WTC11 (cell line): ENCODE measurements at regions of chr10 and their contacts with region 1.

Region 1: GRCh38 chr10:116737627-116738327 is 4.6 kb downstream of the HSPA12A start:
- DNase-seq: peak; percentile 49
- ATAC-seq: peak; percentile 47
- H3K4me3 Mint-ChIP-seq: no peak overlapping the region
- H3K27ac Mint-ChIP-seq: no peak overlapping the region
- H3K4me1 Mint-ChIP-seq: peaks cover 8% of the 10 kb centered on the region
- H3K27me3 Mint-ChIP-seq: peaks cover 40% of the 10 kb centered on the region
- CTCF ChIP-seq: no peak

Region 2: DNA sequence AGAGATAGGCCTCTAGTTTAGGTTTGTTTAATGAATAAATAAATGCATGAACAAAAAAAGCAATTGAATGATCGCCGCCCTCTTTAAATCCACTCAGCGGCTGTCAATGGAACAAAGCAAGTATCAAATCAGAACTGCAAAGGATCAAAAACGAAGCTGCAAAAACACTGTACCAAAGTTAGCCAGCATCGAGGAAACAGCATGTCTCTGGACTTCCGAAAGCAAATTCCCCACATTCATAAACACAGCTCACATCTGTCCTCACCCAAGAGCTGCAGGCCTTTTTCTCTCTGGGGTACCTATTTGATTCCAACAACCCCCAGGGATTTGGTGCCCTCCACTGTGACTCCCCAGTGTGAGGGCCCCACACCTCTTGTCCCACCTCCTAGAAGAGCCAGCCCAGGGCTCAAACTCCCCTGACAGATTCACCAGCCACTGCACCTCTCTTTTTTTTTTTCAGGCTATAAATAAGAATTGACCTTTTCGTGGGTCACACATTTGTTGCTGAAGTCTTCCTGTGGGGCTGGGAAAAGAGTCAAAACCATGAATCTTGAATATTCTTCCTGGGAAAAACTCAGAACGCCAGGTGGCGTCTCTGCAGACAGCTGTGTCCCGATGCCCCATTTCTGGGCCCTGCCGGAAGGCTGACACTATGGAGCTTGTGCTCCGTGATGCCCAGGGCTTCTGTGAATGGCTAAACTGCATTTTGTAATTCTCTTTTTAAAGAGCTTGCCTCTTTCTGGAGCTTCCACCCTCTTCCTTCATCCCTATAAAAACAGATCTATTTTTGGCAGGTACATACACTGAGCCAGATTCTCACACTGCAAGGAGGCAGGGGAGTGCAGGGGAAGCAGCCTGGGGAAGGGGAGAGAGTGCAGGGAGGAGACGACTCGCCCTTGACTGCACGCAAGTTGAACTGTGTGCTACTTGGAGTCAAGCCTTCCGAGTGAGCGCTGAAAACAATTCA is 47.1 kb before region 1 on chr10:
- CTCF ChIA-PET with region 1: interaction called, 19 read pairs
- POLR2A ChIA-PET with region 1: no interaction called
- DNase-seq: no peak
- ATAC-seq: peak; percentile 47
- H3K4me3 Mint-ChIP-seq: peak overlapping the region; percentile 46
- H3K27ac Mint-ChIP-seq: peak overlapping the region; percentile 19
- H3K4me1 Mint-ChIP-seq: peaks cover 58% of the 10 kb centered on the region
- H3K27me3 Mint-ChIP-seq: no peaks in the 10 kb centered on the region
- CTCF ChIP-seq: no peak